Heart left ventricle (tissue), 16 donors: ENCODE measurements at regions of chr16 and their contacts with region 1.

Region 1: DNA sequence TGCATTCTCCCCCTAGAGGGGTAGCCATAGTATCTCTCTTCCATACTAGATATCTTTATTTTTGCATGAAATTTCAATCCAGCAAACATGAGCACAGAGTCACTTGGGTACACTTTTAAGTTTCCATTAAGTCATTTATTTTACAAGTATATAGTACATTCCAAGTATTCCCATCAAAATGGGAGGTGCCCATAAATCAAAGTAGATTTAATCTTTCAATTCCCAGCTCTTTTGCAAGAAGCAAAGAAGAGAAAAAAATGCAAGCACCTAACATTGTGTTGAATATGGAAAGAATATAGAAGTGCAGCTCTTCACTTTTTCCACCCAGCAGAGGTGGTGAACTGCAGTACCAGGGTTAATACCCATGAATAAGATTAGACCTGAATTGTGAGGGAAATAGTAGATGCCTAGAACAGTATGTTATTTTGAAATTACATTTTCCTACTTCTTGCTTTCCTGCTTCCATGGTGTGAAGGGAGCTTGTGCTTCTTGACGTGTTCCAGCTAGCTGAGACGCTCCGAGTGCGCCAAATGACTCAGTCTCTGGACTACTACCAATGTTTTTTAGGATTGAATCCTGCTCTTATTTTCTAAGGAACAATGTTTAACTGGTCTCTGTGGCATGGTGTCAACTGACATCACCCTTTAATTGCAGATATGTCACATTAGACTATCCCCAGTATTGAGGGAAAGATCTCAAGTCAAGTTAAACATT is 151.1 kb upstream of the MAF start:
- DNase-seq: peak in 4 of 5 donors; percentile 42 to 62 (median 50)
- ATAC-seq: peak; percentile 47 to 83 (median 76)
- H3K4me3 ChIP-seq: no peak overlapping the region
- H3K27ac ChIP-seq: no peak overlapping the region
- H3K4me1 ChIP-seq: peaks cover 0 to 19% (median 7%) of the 10 kb centered on the region in 12 donors
- H3K27me3 ChIP-seq: no peaks in the 10 kb centered on the region
- CTCF ChIP-seq: no peak
- POLR2A ChIP-seq: no peak

Region 2: DNA sequence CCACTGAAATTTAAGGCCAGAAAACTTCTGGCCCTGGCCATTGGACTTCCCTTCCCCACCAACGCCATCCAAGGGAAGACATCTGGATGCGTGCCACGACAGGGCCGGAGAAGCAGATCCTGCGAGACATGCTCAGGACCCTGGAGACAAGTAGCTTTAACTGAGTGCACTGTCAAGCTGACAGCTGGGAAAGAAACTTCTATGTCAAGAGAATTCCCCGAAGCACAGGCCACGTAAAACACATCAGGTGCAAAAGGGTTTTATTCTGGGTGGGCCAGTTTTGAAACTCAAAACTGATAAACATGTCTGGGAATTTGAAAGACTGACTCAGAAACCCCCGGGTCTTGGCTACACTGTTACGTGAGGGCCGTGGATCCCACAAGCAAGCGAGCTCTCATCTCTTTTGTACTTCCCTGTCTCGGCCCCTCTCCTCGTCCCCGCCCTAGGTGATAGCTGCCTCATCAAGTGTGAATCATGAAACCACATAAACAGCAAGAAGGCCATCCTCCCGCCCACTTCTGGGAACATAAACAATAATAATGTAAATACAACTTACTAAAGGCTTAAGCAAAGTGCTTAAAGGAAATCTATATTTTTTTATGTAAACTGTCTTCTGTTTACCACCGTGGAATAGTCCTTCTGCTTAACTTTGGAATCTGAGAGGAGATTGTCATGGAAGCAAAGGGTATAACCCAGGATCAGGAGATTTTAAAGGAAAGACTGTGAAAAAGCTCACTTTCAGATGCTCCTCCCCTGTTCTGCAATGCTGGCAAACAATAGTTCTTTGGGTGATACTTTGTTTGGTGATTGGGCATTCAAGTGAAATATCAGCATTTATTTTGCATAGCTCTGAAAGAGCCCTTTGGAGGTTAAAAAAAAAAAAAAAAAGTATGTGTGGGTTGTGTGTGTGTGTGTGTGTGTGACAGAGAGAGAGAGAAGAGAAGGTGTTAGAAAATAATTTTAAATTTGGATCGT is 254.9 kb after region 1 on chr16:
- intact Hi-C with region 1: loop called in 1 of 10 experiments (anchors 10 kb)
- DNase-seq: peak; percentile 28 to 77 (median 47)
- ATAC-seq: peak in 3 of 4 donors; percentile 41 to 70 (median 62)
- H3K4me3 ChIP-seq: no peak overlapping the region
- H3K27ac ChIP-seq: peak overlapping the region in 1 of 12 donors; percentile 15
- H3K4me1 ChIP-seq: peaks cover 0 to 3% (median 0%) of the 10 kb centered on the region in 12 donors
- H3K27me3 ChIP-seq: peaks cover 0 to 4% (median 0%) of the 10 kb centered on the region in 9 donors
- CTCF ChIP-seq: no peak
- POLR2A ChIP-seq: no peak